Activated CD4-positive, alpha-beta T cell treated with anti-CD3 and anti-CD28 coated beads, Interleukin-2, amount 10 ng/mL, durations not matched to agents 24 days and 14 days (primary cell): ENCODE measurements at regions of chr9 and their contacts with region 1.

Region 1: GRCh38 chr9:114505187-114506081 is at the start of gene WHRN:
- DNase-seq: peak; percentile 97
- H3K4me3 Mint-ChIP-seq: peak within 1 kb of the TSS; percentile 87
- H3K27ac Mint-ChIP-seq: peak within 1 kb of the TSS; percentile 82
- H3K4me1 Mint-ChIP-seq: peaks cover 17% of the 10 kb centered on the region
- H3K27me3 Mint-ChIP-seq: peaks cover 78% of the 10 kb centered on the region
- total RNA-seq, gene WHRN: 2.0 and 2.1 TPM in 2 replicates

Region 2: DNA sequence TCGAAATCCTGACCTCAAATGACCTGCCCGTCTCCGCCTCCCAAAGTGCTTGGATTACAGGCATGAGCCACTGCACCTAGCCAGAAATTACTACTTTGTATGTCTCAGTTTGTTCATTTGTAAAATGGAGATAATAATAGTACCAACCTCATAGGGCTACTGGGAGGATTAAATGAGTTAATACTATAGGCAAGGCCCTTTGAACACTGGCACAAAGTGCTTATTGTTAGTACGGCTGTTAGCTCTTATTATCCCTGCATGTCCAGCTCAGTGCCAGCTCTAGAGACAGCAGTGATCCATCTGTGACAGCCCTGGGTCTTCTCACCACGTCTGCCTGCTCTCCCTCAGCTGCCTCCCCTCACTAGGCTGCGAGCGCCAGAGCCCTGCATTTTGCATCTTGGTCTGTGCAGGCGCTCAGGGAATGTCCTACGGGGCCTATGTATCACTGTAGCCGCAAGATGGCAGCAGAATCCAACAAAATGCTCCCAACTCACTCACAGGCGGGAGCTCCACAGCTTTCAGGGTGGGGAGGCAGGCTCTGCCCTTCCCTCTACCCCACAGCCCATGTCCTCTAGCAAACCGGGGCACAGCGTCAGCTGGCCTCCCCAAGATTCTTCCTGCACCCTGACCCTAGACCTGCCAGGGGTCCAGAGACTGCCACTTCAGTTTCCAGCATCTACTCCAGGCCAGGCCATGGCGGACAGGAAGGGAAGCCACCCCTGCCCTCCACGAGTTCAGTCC is 100.0 kb before region 1 on chr9:
- intact Hi-C with region 1: loop called (anchors 1 kb)
- DNase-seq: peak; percentile 94
- H3K4me3 Mint-ChIP-seq: no peak overlapping the region
- H3K27ac Mint-ChIP-seq: peak overlapping the region; percentile 51
- H3K4me1 Mint-ChIP-seq: peaks cover 11% of the 10 kb centered on the region
- H3K27me3 Mint-ChIP-seq: no peaks in the 10 kb centered on the region

Region 3: DNA sequence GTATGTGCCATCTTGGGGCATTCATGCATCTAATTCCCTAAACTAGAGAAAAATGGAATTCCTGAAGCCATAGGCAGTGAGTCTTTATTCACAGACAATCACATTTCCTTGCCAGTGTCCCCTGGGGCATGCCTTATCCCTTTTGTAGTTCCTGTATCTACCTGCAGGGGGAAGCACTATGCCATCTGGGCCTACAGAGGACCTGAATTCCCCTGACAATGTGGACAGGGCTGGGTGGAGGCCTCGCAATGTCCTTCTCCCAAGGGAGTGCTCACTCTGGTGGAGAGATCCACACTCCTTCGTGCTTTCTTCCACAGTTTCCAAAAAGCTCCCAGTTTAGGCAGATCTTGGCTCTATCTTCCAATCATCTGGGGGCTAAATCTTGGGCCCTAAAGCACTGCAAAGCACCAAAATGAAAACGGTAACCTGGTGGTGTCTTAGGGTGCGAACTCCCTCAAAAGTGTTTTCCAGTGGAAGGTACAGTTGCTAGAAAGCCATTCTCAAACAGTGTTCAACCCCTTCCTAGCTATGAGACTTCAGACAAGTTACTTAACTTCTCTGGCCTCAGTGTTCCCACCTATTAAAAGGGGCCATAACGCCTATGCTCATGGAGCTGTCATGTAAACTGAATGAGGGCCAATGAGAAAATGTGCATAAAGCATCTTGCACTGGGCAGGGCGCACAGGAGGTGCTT is 17.7 kb before region 1 on chr9:
- intact Hi-C with region 1: loop called (anchors 1 kb)
- DNase-seq: peak; percentile 92
- H3K4me3 Mint-ChIP-seq: no peak overlapping the region
- H3K27ac Mint-ChIP-seq: peak overlapping the region; percentile 12
- H3K4me1 Mint-ChIP-seq: peaks cover 32% of the 10 kb centered on the region
- H3K27me3 Mint-ChIP-seq: peaks cover 8% of the 10 kb centered on the region

Region 4: DNA sequence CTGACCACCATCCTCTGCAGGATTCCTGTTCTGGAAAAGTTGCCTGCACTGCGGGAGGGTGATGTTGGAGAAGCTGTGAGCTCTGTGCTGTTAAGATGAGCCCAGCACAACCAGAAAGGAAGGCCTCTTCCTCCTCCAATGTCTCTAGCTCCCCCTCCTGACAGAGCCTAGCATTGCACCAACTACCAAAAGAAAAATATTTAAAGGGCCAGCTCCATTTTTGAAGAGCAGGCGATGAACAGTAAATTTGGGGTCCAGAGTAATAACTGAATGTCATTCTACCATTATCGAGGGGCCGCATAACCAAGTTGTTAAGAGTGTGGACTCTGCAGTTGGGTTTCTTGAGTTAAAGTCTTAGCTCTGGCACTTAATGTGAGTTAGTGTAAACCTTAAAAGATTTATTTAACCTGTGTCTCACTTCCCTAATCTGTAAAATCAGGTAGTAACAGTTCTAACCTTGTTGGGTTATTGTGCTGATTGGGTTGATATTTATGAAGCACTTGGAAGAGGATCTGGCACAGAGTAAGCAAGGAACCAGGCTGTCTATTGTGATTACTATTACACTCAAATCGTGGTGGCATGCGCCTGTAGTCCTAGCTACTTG is 148.2 kb after region 1 on chr9:
- intact Hi-C with region 1: loop called (anchors 5 kb)
- DNase-seq: peak; percentile 96
- H3K4me3 Mint-ChIP-seq: no peak overlapping the region
- H3K27ac Mint-ChIP-seq: peak overlapping the region; percentile 45
- H3K4me1 Mint-ChIP-seq: peaks cover 19% of the 10 kb centered on the region
- H3K27me3 Mint-ChIP-seq: no peaks in the 10 kb centered on the region